CD4-positive, alpha-beta memory T cell (primary cell): ENCODE measurements at regions of chr9 and their contacts with region 1.

Region 1: DNA sequence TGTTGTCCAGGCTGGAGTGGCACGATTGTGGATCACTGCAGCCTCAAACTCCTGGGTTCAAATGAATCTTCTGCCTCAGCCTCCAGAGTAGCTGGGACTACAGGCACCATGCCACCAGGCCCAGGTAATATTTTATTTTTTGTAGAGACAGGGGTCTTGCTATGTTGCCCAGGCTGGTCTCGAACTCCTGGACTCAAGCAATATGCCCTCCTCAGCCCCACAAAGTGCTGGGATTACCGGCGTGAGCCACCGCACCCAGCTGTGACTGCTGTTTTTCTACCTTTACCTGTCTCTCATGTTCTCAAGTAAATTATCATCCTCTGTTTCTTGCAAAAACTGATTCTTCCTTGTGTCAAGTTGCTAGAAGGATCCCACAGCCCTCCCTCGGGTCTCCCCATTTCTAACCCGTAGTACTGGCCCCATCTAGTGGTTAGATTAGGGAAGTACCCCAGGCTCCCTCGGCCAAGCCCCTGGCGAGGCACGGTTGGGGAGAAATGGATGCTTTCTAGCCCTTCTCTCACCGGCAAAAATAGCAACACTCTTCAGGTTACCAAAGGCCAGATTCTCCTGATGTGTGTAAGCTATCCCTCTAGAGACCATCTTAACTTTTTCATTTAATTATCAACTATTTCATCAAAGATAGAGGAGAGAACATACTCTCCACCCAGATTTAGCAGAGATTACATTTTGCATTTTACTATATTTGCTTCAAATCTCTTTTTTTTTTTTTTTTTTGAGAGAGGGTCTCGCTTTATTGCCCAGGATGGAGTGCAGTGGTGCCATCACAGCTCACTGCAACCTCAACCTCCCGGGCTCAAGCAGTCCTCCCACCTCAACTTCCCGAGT is 19.2 kb upstream of the TOR1B start:
- DNase-seq: peak; percentile 68 to 78 (median 74)
- H3K4me3 ChIP-seq: no peak overlapping the region
- H3K4me3 Mint-ChIP-seq: no peak overlapping the region
- H3K27ac ChIP-seq: no peak overlapping the region
- H3K27ac Mint-ChIP-seq: peak overlapping the region in 2 of 7 donors; percentile 20 to 61
- H3K4me1 ChIP-seq: peaks cover 3% of the 10 kb centered on the region
- H3K4me1 Mint-ChIP-seq: peaks cover 0 to 4% (median 3%) of the 10 kb centered on the region in 4 donors
- H3K27me3 ChIP-seq: no peaks in the 10 kb centered on the region
- H3K27me3 Mint-ChIP-seq: peaks cover 5 to 6% of the 10 kb centered on the region in 2 donors

Region 2: GRCh38 chr9:129641746-129642513 is 141.8 kb before region 1 on chr9 and contains the start of gene ASB6:
- CTCF ChIA-PET with region 1: interaction called, 3 read pairs
- POLR2A ChIA-PET with region 1: no interaction called
- intact Hi-C with region 1: loop called (anchors 1 kb)
- DNase-seq: peak; percentile 86 to 92 (median 87)
- H3K4me3 ChIP-seq: peak within 1 kb of the TSS; percentile 66 to 95
- H3K4me3 Mint-ChIP-seq: peak within 1 kb of the TSS; percentile 81 to 92 (median 84)
- H3K27ac ChIP-seq: peak within 1 kb of the TSS; percentile 81
- H3K27ac Mint-ChIP-seq: peak within 1 kb of the TSS; percentile 85 to 94 (median 89)
- H3K4me1 ChIP-seq: peaks cover 26% of the 10 kb centered on the region
- H3K4me1 Mint-ChIP-seq: peaks cover 10 to 33% (median 18%) of the 10 kb centered on the region in 4 donors
- H3K27me3 ChIP-seq: no peaks in the 10 kb centered on the region
- H3K27me3 Mint-ChIP-seq: no peaks in the 10 kb centered on the region
- total RNA-seq, gene ASB6: 33.0 to 33.1 TPM